ENCODE measurements at regions of chr2 and their contacts with region 1.

Region 1: GRCh38 chr2:217886720-217887309 is 116.0 kb downstream of the TNS1 start:
- DNase-seq: peak; percentile 68
- H3K4me3 ChIP-seq: no peak overlapping the region; a peak in 1 of 4 replicates
- H3K27ac ChIP-seq: peak overlapping the region; percentile 30 to 41; a peak in 3 of 4 replicates
- H3K4me1 ChIP-seq: peaks cover 0 to 28% of the 10 kb centered on the region in 2 experiments; a peak in 1 of 4 replicates
- H3K27me3 ChIP-seq: no peaks in the 10 kb centered on the region
- CTCF ChIP-seq: peak; percentile 80
- EP300 ChIP-seq: no peak
- RAD21 ChIP-seq: peak; percentile 74

Region 2: GRCh38 chr2:217836901-217837491 is 49.8 kb before region 1 on chr2:
- CTCF ChIA-PET with region 1: interaction called, 11 read pairs
- POLR2A ChIA-PET with region 1: interaction called, 3 read pairs
- DNase-seq: peak; percentile 58
- H3K4me3 ChIP-seq: no peak overlapping the region; a peak in 1 of 4 replicates
- H3K27ac ChIP-seq: peak overlapping the region; percentile 58 to 77; a peak in 3 of 4 replicates
- H3K4me1 ChIP-seq: peaks cover 10 to 25% of the 10 kb centered on the region in 2 experiments; a peak in 2 of 4 replicates
- H3K27me3 ChIP-seq: no peaks in the 10 kb centered on the region
- CTCF ChIP-seq: peak; percentile 24; the same call in 1 of the 2 replicates
- EP300 ChIP-seq: no peak
- RAD21 ChIP-seq: no peak

Region 3: GRCh38 chr2:217872319-217872718 is 14.5 kb before region 1 on chr2:
- CTCF ChIA-PET with region 1: interaction called, 26 read pairs
- POLR2A ChIA-PET with region 1: interaction called, 5 read pairs
- DNase-seq: no peak
- H3K4me3 ChIP-seq: no peak overlapping the region
- H3K27ac ChIP-seq: no peak overlapping the region
- H3K4me1 ChIP-seq: peaks cover 9% of the 10 kb centered on the region in 2 experiments; a peak in 2 of 4 replicates
- H3K27me3 ChIP-seq: no peaks in the 10 kb centered on the region
- CTCF ChIP-seq: peak; percentile 19; the same call in 1 of the 2 replicates
- EP300 ChIP-seq: no peak
- RAD21 ChIP-seq: no peak

Region 4: GRCh38 chr2:217934321-217935131 is 47.7 kb after region 1 on chr2:
- CTCF ChIA-PET with region 1: interaction called, 54 read pairs
- POLR2A ChIA-PET with region 1: interaction called, 18 read pairs
- DNase-seq: no peak
- H3K4me3 ChIP-seq: 0 out of 4 replicates have a peak overlapping the region, but pooled peaks of 1 of the 2 experiments have one; percentile 15
- H3K27ac ChIP-seq: peak overlapping the region; percentile 86 to 96
- H3K4me1 ChIP-seq: peaks cover 75 to 94% of the 10 kb centered on the region in 2 experiments
- H3K27me3 ChIP-seq: no peaks in the 10 kb centered on the region
- CTCF ChIP-seq: no peak
- EP300 ChIP-seq: peak in 1 of 2 experiments; percentile 80; a peak in 1 of 4 replicates
- RAD21 ChIP-seq: no peak

Region 5: DNA sequence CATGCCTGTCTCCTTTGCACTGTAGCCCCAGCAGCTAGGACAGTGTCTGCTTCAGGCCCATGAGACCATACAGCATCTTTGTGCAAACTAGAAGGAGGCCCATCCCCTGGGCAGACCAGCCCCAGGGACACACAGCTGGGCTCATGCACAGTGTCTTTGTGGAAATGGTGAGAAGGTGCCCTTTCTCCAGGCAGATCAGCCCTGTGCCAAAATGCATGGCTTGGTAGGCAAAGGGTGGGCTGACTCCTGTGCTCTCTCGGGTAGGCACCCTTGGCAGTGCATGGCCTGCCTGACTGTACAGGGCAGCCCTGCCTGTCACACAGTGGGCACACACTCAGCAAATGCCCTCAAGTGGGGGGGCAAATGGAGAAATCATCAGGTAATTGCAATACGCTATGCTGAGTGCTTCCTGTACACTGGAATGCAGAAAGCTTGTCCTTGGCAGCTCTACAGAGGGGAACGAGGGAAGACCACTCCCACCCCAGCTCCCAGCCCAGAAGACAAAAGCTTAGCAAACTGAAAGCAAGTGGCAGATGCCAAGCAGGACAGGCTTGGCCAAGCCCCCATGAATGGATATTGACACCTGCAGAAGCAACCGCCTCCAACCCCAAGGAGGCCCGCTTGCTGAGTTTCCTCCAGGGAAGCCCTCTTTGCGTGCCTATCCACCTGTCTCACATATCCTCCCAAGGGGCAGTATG is 94.4 kb after region 1 on chr2:
- CTCF ChIA-PET with region 1: interaction called, 61 read pairs
- POLR2A ChIA-PET with region 1: no interaction called
- DNase-seq: no peak
- H3K4me3 ChIP-seq: no peak overlapping the region
- H3K27ac ChIP-seq: no peak overlapping the region
- H3K4me1 ChIP-seq: peaks cover 0 to 3% of the 10 kb centered on the region in 2 experiments; a peak in 1 of 4 replicates
- H3K27me3 ChIP-seq: no peaks in the 10 kb centered on the region
- CTCF ChIP-seq: no peak
- EP300 ChIP-seq: no peak
- RAD21 ChIP-seq: no peak

Region 6: DNA sequence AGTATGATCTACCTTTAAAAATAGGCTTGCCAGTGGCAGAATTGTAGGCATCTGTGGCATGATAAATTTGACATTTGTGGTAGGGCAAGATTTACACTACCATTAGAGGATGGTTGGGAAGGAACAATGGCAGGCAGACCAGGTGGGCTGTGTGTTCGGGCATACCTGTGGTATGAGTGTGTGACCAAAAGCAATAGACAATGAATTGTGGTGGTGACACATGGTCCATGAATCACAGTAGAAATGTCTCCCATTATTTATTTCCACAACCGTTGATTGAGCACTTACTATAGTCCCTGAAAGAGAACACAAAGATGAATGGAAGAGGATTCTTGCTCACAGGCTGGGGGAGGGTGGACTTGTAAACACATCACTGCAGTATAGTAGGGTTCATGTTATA is 152.4 kb after region 1 on chr2:
- CTCF ChIA-PET with region 1: no interaction called
- POLR2A ChIA-PET with region 1: no interaction called
- DNase-seq: no peak
- H3K4me3 ChIP-seq: no peak overlapping the region
- H3K27ac ChIP-seq: no peak overlapping the region
- H3K4me1 ChIP-seq: peaks cover 0 to 5% of the 10 kb centered on the region in 2 experiments; a peak in 1 of 4 replicates
- H3K27me3 ChIP-seq: peaks cover 14% of the 10 kb centered on the region; the same call in 1 of the 2 replicates
- CTCF ChIP-seq: no peak
- EP300 ChIP-seq: no peak
- RAD21 ChIP-seq: no peak

Measured in SK-N-SH (cell line).